Heart right ventricle (tissue), 16 donors: ENCODE measurements at regions of chr7 and their contacts with region 1.

Region 1: DNA sequence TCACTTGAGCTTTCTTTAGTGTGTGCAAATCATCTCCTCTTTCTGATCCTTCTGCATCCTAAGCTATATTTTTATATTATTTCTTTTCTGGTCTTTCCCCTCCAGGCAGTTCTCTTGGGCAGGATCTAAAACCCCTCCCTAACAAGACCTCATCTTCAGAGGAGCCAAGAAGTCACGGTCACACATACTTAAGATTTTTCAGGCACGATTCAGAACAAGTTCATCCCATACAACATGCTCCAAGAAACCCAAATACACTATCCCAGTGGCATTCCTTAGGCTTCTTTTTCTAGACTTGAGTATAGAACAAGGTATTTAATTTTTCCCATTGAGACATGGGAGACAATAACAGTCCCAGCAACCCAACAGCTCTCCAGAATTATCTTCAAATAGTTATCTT is 1251.5 kb downstream of the DNAJB9 start:
- DNase-seq: no peak
- ATAC-seq: no peak
- H3K4me3 ChIP-seq: no peak overlapping the region
- H3K27ac ChIP-seq: no peak overlapping the region
- H3K4me1 ChIP-seq: no peaks in the 10 kb centered on the region
- H3K27me3 ChIP-seq: no peaks in the 10 kb centered on the region
- CTCF ChIP-seq: no peak

Region 2: DNA sequence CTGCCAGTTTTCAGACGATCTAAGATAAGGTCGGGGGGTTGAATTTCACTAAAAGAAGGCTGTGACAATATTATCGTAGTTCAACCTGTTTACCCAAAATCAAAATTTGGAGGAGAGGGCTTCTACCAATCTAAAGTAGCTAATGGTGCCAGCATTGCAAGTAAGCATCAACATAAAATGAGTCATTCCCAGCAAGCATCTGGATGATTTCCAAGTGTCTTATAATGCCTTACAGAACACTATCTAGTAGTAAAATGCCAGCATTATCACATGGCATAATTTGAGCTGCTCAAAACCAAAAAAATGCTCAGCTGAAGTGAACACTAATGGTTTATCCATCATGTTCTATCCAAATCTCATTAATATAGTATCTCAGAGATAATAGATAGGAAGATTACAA is 57.5 kb before region 1 on chr7:
- intact Hi-C with region 1: loop called in 1 of 10 experiments (anchors 10 kb)
- DNase-seq: no peak
- ATAC-seq: no peak
- H3K4me3 ChIP-seq: no peak overlapping the region
- H3K27ac ChIP-seq: no peak overlapping the region
- H3K4me1 ChIP-seq: no peaks in the 10 kb centered on the region
- H3K27me3 ChIP-seq: no peaks in the 10 kb centered on the region
- CTCF ChIP-seq: no peak